T-cell (primary cell): ENCODE measurements at regions of chr5 and their contacts with region 1.

Region 1: DNA sequence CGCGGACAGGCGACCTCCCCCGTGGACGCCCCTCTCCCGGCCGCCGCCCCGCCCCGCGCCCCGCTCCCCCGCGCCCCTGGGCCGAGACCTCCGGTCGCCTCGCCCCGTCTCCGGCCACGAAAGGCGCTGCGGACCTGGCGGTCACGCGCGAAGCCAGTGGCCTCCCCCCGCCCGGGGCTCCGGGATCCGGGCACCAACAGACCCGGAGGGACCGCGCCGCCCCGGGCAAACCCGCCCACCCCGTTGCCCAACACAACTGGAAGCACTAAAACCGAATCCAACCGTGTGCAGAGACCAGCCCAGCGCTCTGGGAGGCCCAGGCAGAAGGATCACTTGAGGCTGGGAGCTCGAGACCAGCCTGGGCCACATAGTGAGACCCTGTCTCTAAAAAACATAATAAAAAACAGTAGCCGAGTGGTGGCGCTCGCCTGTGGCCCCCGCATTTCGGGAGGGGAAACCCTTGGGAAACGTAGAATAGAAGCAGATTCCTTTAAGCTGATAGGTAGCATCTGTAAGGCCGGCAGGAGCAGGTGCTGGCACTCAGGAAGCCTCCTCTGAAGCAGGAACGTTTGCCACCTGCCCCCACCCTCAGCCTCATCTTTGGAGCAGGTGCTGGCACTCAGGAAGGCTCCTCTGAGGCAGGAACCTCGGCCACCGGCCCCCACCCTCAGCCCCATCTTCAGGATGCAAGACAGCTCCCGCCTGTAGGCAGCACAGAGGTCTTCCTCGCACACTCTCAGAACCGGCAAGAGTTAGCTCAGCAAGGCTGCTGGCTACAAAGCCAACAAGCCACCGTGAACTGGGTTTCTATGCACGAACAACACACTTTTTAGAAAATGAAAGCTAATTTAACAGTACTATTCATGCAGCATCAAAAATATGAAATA is 4.6 kb upstream of the SLC9A3 start:
- DNase-seq: no peak
- ATAC-seq: peak in 2 of 4 experiments; percentile 33 to 51
- H3K4me3 ChIP-seq: peak overlapping the region in 1 of 2 donors; percentile 20
- H3K4me3 Mint-ChIP-seq: peak overlapping the region; percentile 17 to 37 (median 34)
- H3K27ac ChIP-seq: no peak overlapping the region
- H3K27ac Mint-ChIP-seq: no peak overlapping the region
- H3K4me1 ChIP-seq: peaks cover 0 to 26% of the 10 kb centered on the region in 2 experiments
- H3K4me1 Mint-ChIP-seq: peaks cover 24 to 40% (median 40%) of the 10 kb centered on the region in 3 donors
- H3K27me3 ChIP-seq: peaks cover 0 to 78% of the 10 kb centered on the region in 2 experiments
- H3K27me3 Mint-ChIP-seq: peaks cover 47 to 66% of the 10 kb centered on the region in 2 donors

Region 2: DNA sequence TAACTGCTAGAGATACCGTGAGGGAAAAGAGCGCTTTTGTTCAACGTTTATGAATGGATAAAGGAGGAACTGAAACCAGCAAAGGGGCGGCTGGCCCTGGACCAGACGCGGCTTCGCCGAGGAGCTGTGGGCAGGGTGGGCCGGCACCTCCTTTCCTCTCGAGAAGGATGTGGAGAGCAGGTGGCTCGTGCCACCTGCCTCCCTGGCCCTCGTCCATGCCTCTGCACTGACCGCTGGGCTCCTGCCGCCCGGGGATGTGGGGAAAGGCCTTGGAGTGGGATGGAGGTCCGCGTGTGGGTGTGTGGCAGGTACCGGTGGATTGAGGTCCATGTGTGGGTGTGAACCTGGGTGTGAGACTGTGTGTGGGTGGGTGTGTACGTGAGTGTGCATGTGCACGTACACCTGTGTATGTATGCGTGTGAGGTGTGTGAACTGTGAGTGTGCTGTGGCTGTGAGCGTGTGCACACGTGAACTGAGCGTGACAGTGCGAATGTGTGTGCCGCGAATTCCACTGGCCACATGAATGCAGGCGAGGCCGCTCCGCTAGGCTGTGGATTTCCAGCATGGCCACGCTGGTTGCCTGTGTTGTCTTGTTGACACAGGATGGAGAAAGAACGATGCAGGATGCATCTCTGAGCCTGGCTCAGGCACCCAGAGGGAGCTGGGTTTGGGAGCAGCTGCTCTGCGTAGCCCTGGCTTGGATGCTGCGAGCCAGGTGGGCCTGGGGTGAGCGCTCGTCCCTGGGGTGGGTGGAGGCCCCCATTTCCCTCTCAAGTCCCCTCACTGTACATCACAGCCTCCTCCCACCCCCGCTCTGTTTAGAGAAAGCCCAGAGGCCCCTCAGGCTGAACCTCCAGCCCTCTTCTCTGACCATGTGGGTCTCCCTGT is 78.9 kb after region 1 on chr5:
- CTCF ChIA-PET with region 1: no interaction called
- POLR2A ChIA-PET with region 1: interaction called in 1 of 2 experiments, 10 read pairs
- DNase-seq: no peak
- ATAC-seq: no peak
- H3K4me3 ChIP-seq: peak overlapping the region in 1 of 2 donors; percentile 11
- H3K4me3 Mint-ChIP-seq: peak overlapping the region in 1 of 3 donors; percentile 50
- H3K27ac ChIP-seq: no peak overlapping the region
- H3K27ac Mint-ChIP-seq: no peak overlapping the region
- H3K4me1 ChIP-seq: peaks cover 4 to 26% of the 10 kb centered on the region in 2 experiments
- H3K4me1 Mint-ChIP-seq: peaks cover 18 to 29% (median 27%) of the 10 kb centered on the region in 3 donors
- H3K27me3 ChIP-seq: peaks cover 0 to 57% of the 10 kb centered on the region in 2 experiments
- H3K27me3 Mint-ChIP-seq: peaks cover 23 to 24% of the 10 kb centered on the region in 2 donors